Uterus (tissue), 4 donors: ENCODE measurements at regions of chr1 and their contacts with region 1.

Region 1: DNA sequence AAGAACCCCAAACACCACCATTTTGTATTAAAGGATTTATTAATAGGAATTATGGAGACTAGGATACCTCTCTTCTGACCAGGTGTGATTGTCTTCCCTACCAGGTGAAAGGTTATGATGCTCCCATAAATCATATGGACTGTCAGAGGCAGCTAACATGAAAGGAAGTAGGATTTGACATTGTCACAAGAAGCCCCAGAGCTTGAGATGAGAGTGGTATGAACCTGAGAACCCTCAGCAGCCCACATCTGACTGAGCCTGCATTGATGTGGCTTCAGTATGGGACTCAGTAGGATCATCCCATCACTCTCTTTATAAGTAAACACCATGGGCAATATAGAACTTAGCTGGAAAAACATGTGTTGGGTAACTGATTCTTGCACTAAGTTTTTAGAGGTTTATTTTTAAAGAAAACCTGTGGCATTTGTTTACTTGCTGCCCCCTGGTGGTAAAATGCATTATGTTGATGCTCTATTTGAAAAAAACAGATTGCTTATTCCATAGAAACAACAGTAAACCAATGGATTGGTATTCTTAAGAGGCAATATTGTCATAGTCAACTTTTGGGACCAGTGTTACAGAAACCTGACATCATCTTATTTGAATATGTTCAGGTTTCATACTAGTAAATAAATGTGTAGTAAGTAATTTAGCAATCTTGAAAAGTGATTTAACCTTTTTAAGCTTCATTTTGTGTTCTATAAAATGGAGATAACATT is 16.6 kb upstream of the CACYBP start:
- DNase-seq: peak in 1 of 2 donors; percentile 28
- H3K4me3 ChIP-seq: no peak overlapping the region
- H3K27ac ChIP-seq: no peak overlapping the region
- H3K4me1 ChIP-seq: no peaks in the 10 kb centered on the region
- H3K27me3 ChIP-seq: no peaks in the 10 kb centered on the region
- CTCF ChIP-seq: peak; percentile 57 to 59 (median 58)
- POLR2A ChIP-seq: no peak

Region 2: GRCh38 chr1:174769961-174770549 is 213.1 kb before region 1 on chr1:
- intact Hi-C with region 1: loop called (anchors 10 kb)
- DNase-seq: no peak
- H3K4me3 ChIP-seq: no peak overlapping the region
- H3K27ac ChIP-seq: no peak overlapping the region
- H3K4me1 ChIP-seq: no peaks in the 10 kb centered on the region
- H3K27me3 ChIP-seq: no peaks in the 10 kb centered on the region
- CTCF ChIP-seq: peak; percentile 61 to 74 (median 70)
- POLR2A ChIP-seq: no peak

Region 3: GRCh38 chr1:175252561-175252960 is 269.4 kb after region 1 on chr1:
- intact Hi-C with region 1: no loop called
- DNase-seq: no peak
- H3K4me3 ChIP-seq: no peak overlapping the region
- H3K27ac ChIP-seq: no peak overlapping the region
- H3K4me1 ChIP-seq: no peaks in the 10 kb centered on the region
- H3K27me3 ChIP-seq: no peaks in the 10 kb centered on the region
- CTCF ChIP-seq: no peak
- POLR2A ChIP-seq: no peak